Testis (tissue), 5 donors: ENCODE measurements at regions of chr19 and their contacts with region 1.

Region 1: DNA sequence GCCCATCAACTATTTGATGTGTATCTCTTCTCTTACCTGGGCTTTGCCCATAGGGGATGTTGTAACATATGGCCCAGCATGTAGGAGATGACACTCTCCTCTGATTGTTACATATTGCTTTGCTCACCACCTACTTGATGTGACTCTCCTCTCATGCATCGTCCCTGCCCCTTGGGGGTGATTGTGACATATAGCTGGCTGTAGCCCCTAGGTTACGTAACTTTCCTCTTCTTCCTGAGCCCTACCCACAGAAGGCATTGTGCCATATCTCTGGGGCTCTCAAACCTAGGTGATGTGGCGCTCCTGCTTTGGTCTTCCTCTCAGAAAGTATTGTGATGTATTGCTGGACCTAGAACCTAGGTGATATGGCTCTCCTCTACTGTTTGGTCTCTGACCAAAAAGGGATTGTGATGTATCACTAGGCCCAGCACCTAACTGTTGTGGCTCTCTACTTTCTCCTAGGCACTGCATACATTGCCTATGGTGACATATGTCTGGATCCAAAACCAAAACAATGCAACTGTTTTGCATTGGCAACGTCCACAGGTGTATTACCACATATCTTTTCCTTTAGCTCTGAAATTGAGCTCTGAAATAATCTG is 71.9 kb upstream of the ZNF724 start:
- DNase-seq: no peak
- H3K4me3 ChIP-seq: no peak overlapping the region
- H3K27ac ChIP-seq: no peak overlapping the region
- H3K4me1 ChIP-seq: no peaks in the 10 kb centered on the region
- H3K27me3 ChIP-seq: no peaks in the 10 kb centered on the region
- CTCF ChIP-seq: no peak
- POLR2A ChIP-seq: no peak

Region 2: GRCh38 chr19:23263870-23264590 is 58.0 kb before region 1 on chr19:
- intact Hi-C with region 1: no loop called
- DNase-seq: no peak
- H3K4me3 ChIP-seq: no peak overlapping the region
- H3K27ac ChIP-seq: no peak overlapping the region
- H3K4me1 ChIP-seq: no peaks in the 10 kb centered on the region
- H3K27me3 ChIP-seq: no peaks in the 10 kb centered on the region
- CTCF ChIP-seq: no peak
- POLR2A ChIP-seq: no peak

Region 3: GRCh38 chr19:23470873-23471545 is 149.0 kb after region 1 on chr19:
- intact Hi-C with region 1: loop called (anchors 2 kb)
- DNase-seq: no peak
- H3K4me3 ChIP-seq: peak overlapping the region in 1 of 2 donors; percentile 34
- H3K27ac ChIP-seq: no peak overlapping the region
- H3K4me1 ChIP-seq: no peaks in the 10 kb centered on the region
- H3K27me3 ChIP-seq: no peaks in the 10 kb centered on the region
- CTCF ChIP-seq: no peak
- POLR2A ChIP-seq: no peak